GM12878 (cell line): ENCODE measurements at regions of chr7 and their contacts with region 1.

Region 1: DNA sequence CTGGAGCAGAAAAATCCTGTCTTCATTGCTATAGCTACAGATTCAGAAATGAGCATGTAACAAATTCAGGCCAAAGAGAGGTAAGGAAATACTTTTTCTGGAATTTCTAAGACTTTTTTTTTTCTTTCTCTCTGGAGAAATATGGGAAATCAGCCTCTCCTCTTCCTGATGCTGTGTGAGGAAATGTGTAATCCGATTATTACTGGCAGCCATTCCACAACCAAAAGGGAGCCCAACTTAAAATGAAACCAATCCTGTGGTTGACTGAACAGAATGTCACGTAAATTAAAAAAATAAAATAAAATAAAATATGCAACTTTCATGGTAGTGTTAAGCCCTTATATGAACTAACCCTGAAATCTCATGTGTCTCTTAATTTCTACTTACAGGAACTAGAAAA is 10.7 kb upstream of the POT1 start:
- DNase-seq: no peak
- ATAC-seq: no peak
- H3K4me3 ChIP-seq: no peak overlapping the region
- H3K27ac ChIP-seq: no peak overlapping the region
- H3K4me1 ChIP-seq: no peaks in the 10 kb centered on the region
- H3K27me3 ChIP-seq: no peaks in the 10 kb centered on the region
- CTCF ChIP-seq: no peak
- EP300 ChIP-seq: no peak
- POLR2A ChIP-seq: no peak
- RAD21 ChIP-seq: no peak

Region 2: GRCh38 chr7:124723012-124723411 is 217.3 kb before region 1 on chr7:
- CTCF ChIA-PET with region 1: no interaction called
- POLR2A ChIA-PET with region 1: no interaction called
- RAD21 ChIA-PET with region 1: no interaction called
- SMC1A ChIA-PET with region 1: no interaction called
- in situ Hi-C with region 1: no loop called
- intact Hi-C with region 1: no loop called
- DNase-seq: no peak
- ATAC-seq: no peak
- H3K4me3 ChIP-seq: no peak overlapping the region
- H3K27ac ChIP-seq: no peak overlapping the region
- H3K4me1 ChIP-seq: no peaks in the 10 kb centered on the region
- H3K27me3 ChIP-seq: no peaks in the 10 kb centered on the region
- CTCF ChIP-seq: no peak
- EP300 ChIP-seq: no peak
- POLR2A ChIP-seq: no peak
- RAD21 ChIP-seq: no peak

Region 3: GRCh38 chr7:124840435-124840834 is 99.9 kb before region 1 on chr7:
- CTCF ChIA-PET with region 1: no interaction called
- POLR2A ChIA-PET with region 1: interaction called, 10 read pairs
- RAD21 ChIA-PET with region 1: no interaction called
- SMC1A ChIA-PET with region 1: no interaction called
- in situ Hi-C with region 1: no loop called
- intact Hi-C with region 1: no loop called
- DNase-seq: no peak
- ATAC-seq: no peak
- H3K4me3 ChIP-seq: no peak overlapping the region
- H3K27ac ChIP-seq: no peak overlapping the region
- H3K4me1 ChIP-seq: no peaks in the 10 kb centered on the region
- H3K27me3 ChIP-seq: no peaks in the 10 kb centered on the region
- CTCF ChIP-seq: no peak; a peak in 1 of 6 replicates
- EP300 ChIP-seq: no peak
- POLR2A ChIP-seq: no peak
- RAD21 ChIP-seq: no peak

Region 4: GRCh38 chr7:125046767-125047166 is 106.5 kb after region 1 on chr7:
- CTCF ChIA-PET with region 1: no interaction called
- POLR2A ChIA-PET with region 1: no interaction called
- RAD21 ChIA-PET with region 1: no interaction called
- SMC1A ChIA-PET with region 1: no interaction called
- in situ Hi-C with region 1: no loop called
- intact Hi-C with region 1: no loop called
- DNase-seq: no peak
- ATAC-seq: no peak
- H3K4me3 ChIP-seq: no peak overlapping the region
- H3K27ac ChIP-seq: no peak overlapping the region
- H3K4me1 ChIP-seq: no peaks in the 10 kb centered on the region
- H3K27me3 ChIP-seq: no peaks in the 10 kb centered on the region
- CTCF ChIP-seq: no peak
- EP300 ChIP-seq: no peak
- POLR2A ChIP-seq: no peak
- RAD21 ChIP-seq: no peak